Activated B cell treated with CpG ODN at 0.5 μM for 24 hours (primary cell): ENCODE measurements at regions of chr9 and their contacts with region 1.

Region 1: DNA sequence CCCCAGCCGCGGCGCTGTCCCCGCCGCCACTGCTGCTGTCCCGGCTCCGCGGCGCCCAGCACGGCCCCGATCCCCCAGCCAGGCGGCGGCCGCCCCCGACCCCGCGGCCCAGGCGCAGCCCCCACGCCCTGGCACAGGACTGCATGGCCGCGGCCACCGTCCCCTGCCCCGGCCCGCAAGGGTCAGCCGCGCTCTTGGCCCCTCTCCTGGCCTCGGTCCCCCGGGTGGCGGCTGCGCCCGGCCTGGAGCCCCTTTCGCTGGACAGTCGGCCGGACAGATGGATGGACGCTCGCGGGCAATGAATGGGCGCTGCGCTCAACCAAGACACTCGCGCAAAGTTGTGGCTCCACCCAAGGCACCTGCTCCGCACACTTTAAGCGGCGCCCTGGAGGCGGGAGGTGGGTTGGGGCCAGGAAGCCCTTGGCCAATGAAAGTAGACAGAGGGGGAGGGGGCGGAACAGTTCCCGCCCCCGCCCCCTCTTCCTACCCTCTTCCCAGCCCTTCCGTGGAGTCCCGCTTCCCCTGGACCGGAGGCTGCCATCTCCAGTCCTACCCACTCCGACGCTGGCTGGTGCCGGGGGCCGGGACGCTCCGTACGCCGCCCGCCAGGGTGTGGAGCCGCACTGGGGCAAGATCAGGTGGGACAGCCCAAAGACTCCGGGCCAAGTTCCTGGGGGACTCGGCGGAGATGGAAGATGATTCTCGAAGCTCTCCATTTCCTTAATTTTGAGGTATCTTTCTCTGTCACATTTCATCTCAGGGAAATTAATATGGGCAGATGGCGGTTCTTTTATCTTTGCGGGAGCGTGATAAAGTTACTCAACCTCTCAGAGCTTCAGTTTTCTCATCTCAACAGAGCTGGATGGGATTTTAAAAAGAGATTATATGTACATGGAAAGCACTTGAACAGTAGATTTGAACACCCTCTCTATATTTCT is at the start of gene GLDC:
- DNase-seq: peak; percentile 39
- ATAC-seq: peak; percentile 86
- H3K4me3 Mint-ChIP-seq: peak within 1 kb of the TSS; percentile 80
- H3K27ac Mint-ChIP-seq: no peak within 1 kb of the TSS
- H3K4me1 Mint-ChIP-seq: peaks cover 19% of the 10 kb centered on the region
- H3K27me3 Mint-ChIP-seq: peaks cover 32% of the 10 kb centered on the region
- CTCF ChIP-seq: no peak
- total RNA-seq, gene GLDC: 2.3 and 2.6 TPM in 2 replicates

Region 2: DNA sequence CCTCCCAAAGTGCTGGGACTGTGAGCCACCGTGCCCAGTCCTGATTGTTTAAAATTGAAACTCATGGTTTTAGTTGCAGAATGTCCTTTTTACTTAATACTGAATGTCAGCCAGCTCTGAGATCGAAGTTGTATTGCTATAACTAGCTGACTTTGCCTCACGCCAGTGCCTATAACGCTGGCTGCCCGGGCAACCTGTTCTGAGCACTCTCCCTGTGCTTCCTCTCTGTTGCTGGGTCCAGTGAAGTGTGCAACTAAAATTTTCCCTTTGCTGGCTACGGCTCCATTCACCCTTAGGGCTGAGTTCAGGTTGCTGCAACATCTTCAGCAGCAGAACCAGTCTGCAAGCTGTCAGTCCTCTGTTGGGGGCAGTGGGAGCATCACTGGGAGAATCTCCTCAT is 66.0 kb before region 1 on chr9:
- CTCF ChIA-PET with region 1: no interaction called
- POLR2A ChIA-PET with region 1: no interaction called
- intact Hi-C with region 1: no loop called
- DNase-seq: no peak
- ATAC-seq: no peak
- H3K4me3 Mint-ChIP-seq: no peak overlapping the region
- H3K27ac Mint-ChIP-seq: no peak overlapping the region
- H3K4me1 Mint-ChIP-seq: peaks cover 62% of the 10 kb centered on the region
- H3K27me3 Mint-ChIP-seq: peaks cover 3% of the 10 kb centered on the region
- CTCF ChIP-seq: no peak

Region 3: GRCh38 chr9:6590334-6590733 is 55.3 kb before region 1 on chr9:
- CTCF ChIA-PET with region 1: interaction called, 3 read pairs
- POLR2A ChIA-PET with region 1: interaction called, 12 read pairs
- intact Hi-C with region 1: no loop called
- DNase-seq: no peak
- ATAC-seq: no peak
- H3K4me3 Mint-ChIP-seq: no peak overlapping the region
- H3K27ac Mint-ChIP-seq: peak overlapping the region; percentile 62
- H3K4me1 Mint-ChIP-seq: peaks cover 14% of the 10 kb centered on the region
- H3K27me3 Mint-ChIP-seq: no peaks in the 10 kb centered on the region
- CTCF ChIP-seq: no peak

Region 4: GRCh38 chr9:6605202-6605601 is 40.4 kb before region 1 on chr9:
- CTCF ChIA-PET with region 1: no interaction called
- POLR2A ChIA-PET with region 1: interaction called, 3 read pairs
- intact Hi-C with region 1: loop called (anchors 1 kb)
- DNase-seq: peak; percentile 23
- ATAC-seq: peak; percentile 100
- H3K4me3 Mint-ChIP-seq: peak overlapping the region; percentile 64
- H3K27ac Mint-ChIP-seq: peak overlapping the region; percentile 14
- H3K4me1 Mint-ChIP-seq: peaks cover 15% of the 10 kb centered on the region
- H3K27me3 Mint-ChIP-seq: no peaks in the 10 kb centered on the region
- CTCF ChIP-seq: no peak

Region 5: DNA sequence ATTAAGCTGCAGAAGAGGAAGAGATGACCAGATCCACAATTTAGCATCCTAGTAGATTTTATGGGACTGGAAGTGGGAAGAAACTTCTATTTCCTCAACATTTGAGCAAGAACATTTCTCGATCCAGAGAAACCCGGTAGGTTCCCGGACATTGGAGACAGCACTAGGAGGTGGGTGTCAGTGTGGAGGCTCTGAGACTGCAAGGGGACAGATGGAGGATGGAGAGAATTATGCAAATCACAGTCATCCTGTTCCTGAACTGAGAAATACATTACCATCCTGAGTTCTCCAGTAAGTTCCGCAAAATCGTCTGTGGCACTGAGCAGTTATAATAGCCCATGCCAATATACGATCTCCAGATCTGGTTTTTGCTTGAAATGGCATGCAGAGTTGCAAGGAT is 25.7 kb before region 1 on chr9:
- CTCF ChIA-PET with region 1: no interaction called
- POLR2A ChIA-PET with region 1: no interaction called
- intact Hi-C with region 1: loop called (anchors 2 kb)
- DNase-seq: no peak
- ATAC-seq: no peak
- H3K4me3 Mint-ChIP-seq: no peak overlapping the region
- H3K27ac Mint-ChIP-seq: no peak overlapping the region
- H3K4me1 Mint-ChIP-seq: peaks cover 15% of the 10 kb centered on the region
- H3K27me3 Mint-ChIP-seq: peaks cover 2% of the 10 kb centered on the region
- CTCF ChIP-seq: no peak

Region 6: DNA sequence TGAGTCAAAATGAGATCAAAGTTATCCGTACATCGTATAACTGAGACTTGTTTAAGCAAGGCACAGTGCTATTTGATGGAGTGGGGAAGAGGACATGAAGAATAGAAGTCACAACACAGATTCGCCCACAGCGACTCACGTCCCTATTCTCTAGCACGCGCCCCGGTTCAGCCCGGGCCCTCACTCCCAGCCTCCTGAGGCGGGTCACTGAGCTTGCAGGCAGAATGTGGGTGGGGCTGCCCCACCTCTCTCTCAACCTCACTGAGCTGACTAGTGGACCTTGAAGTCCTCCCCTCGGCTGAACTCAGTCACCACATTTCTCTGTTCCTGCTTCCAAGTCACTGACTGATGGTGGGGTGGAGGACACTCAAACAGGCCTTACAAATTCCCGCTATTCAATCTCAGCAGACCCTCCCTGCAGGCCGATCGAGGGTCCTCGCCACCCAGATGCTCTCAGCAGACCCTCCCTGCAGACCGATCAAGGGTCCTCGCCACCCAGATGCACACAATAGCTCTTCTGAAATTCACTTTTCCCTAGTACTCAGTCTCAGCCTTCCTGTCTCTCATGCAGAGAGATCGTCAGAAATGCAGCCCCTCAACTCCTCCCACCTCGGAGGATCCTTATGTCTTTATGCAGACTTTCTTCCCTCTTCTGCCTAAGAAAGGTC is 13.0 kb before region 1 on chr9:
- CTCF ChIA-PET with region 1: interaction called, 3 read pairs
- POLR2A ChIA-PET with region 1: no interaction called
- intact Hi-C with region 1: loop called (anchors 1 kb)
- DNase-seq: peak; percentile 29
- ATAC-seq: peak; percentile 88
- H3K4me3 Mint-ChIP-seq: peak overlapping the region; percentile 6
- H3K27ac Mint-ChIP-seq: no peak overlapping the region
- H3K4me1 Mint-ChIP-seq: peaks cover 33% of the 10 kb centered on the region
- H3K27me3 Mint-ChIP-seq: peaks cover 3% of the 10 kb centered on the region
- CTCF ChIP-seq: no peak

Region 7: DNA sequence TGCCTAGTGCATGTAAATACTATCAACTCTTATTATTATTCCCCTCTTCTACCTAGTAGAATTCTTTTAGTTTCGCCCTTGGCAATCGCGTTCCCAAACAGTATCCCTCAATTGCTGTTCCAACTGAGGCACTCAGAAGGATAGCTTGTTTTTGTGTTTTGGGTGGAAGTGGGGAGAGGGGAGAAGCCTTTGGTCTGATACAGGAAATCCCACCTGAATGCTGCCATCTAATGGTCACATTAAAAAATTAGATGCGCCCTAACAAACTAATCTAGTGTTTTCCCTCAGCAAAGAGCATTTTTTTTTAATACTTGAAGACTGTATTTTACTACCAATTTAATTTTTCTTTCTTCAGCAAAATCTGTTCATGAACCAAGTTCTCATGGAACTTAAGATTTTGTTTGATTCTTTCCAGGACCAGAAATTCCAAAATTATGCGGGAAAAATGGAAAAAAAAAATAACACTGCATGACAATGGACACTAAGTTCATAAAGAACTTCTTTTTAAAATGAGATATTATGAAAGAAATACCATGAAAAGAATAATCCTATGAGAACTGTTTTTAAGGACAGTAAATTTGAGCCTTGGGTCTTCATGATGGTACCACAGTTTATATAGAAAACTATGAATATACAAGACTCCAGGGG is 22.1 kb after region 1 on chr9:
- CTCF ChIA-PET with region 1: no interaction called
- POLR2A ChIA-PET with region 1: interaction called, 9 read pairs
- intact Hi-C with region 1: loop called (anchors 1 kb)
- DNase-seq: no peak
- ATAC-seq: peak; percentile 50
- H3K4me3 Mint-ChIP-seq: no peak overlapping the region
- H3K27ac Mint-ChIP-seq: no peak overlapping the region
- H3K4me1 Mint-ChIP-seq: peaks cover 7% of the 10 kb centered on the region
- H3K27me3 Mint-ChIP-seq: no peaks in the 10 kb centered on the region
- CTCF ChIP-seq: no peak

Region 8: DNA sequence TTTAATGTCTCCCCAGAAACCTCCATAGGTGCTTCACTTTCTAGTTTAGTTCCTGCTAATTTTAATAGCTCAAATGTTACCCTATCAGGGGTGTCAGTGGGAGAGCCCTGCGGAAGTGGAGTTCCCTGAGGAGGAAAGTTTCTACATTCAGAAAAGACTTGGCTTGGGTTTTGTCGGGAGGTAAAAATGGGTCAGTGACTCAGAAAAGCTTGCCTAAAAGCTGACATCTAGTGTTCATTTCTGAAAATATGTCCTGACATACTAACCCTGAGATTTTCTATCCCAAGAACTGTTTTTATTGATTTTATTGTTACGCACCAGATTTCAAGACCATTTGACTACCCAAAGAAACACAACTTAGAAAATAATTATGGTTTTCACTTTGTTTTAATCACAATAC is 40.8 kb after region 1 on chr9:
- CTCF ChIA-PET with region 1: interaction called, 3 read pairs
- POLR2A ChIA-PET with region 1: interaction called, 11 read pairs
- intact Hi-C with region 1: loop called (anchors 2 kb)
- DNase-seq: no peak
- ATAC-seq: no peak
- H3K4me3 Mint-ChIP-seq: peak overlapping the region; percentile 50
- H3K27ac Mint-ChIP-seq: peak overlapping the region; percentile 84
- H3K4me1 Mint-ChIP-seq: peaks cover 75% of the 10 kb centered on the region
- H3K27me3 Mint-ChIP-seq: no peaks in the 10 kb centered on the region
- CTCF ChIP-seq: no peak

Region 9: GRCh38 chr9:6852243-6852963 is 206.8 kb after region 1 on chr9:
- CTCF ChIA-PET with region 1: no interaction called
- POLR2A ChIA-PET with region 1: no interaction called
- intact Hi-C with region 1: no loop called
- DNase-seq: no peak
- ATAC-seq: no peak
- H3K4me3 Mint-ChIP-seq: no peak overlapping the region
- H3K27ac Mint-ChIP-seq: no peak overlapping the region
- H3K4me1 Mint-ChIP-seq: no peaks in the 10 kb centered on the region
- H3K27me3 Mint-ChIP-seq: no peaks in the 10 kb centered on the region
- CTCF ChIP-seq: no peak